ENCODE measurements at regions of chr10 and their contacts with region 1.

Region 1: DNA sequence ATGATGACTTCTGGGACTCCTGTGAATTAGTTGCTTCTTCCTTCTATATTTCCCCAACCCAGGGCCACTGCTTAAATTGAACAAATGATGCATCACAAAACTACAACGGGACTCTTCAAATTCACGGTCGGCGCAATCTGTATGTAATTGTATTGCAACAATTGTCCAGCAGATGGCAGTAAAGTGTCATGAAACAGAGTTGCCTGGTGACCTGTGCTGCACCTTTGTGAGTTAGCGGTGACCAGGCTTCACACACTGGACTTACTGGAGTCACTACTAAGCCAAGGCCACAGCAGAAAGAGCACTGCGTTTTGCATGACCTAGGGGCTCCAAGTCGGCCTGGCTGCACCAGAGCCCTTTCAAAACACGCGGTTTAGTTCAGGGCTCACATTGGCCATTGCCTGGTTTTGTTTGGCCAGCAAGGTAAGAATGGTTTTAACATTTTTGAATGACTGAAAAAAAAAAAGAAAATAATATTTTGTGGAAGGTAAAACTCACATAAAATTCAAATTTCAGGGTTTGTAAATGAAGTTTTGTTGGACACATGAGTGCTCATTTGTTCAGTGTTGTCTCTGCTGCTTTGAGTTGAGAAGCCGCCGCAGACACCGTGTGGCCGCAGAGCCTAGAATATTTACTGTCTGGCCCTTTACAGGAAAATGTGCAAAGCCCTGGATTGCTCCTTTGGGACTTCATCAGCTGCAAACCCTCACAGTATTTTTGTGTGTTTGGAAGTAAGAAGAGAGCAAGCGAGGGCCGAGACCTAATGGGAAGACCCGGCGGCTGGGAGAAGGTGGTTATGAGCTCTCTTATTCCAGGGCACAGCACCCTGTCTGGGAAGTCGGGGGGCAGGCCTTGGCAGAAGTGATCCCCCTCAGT is 23.2 kb upstream of the ZNF32 start:
- DNase-seq: peak; percentile 88
- H3K4me3 Mint-ChIP-seq: no peak overlapping the region
- H3K27ac Mint-ChIP-seq: no peak overlapping the region
- H3K4me1 Mint-ChIP-seq: no peaks in the 10 kb centered on the region
- H3K27me3 Mint-ChIP-seq: peaks cover 26% of the 10 kb centered on the region

Region 2: GRCh38 chr10:43361986-43362839 is 309.7 kb before region 1 on chr10:
- intact Hi-C with region 1: no loop called
- DNase-seq: peak; percentile 99
- H3K4me3 Mint-ChIP-seq: peak overlapping the region; percentile 99
- H3K27ac Mint-ChIP-seq: peak overlapping the region; percentile 99
- H3K4me1 Mint-ChIP-seq: peaks cover 25% of the 10 kb centered on the region
- H3K27me3 Mint-ChIP-seq: no peaks in the 10 kb centered on the region

Region 3: DNA sequence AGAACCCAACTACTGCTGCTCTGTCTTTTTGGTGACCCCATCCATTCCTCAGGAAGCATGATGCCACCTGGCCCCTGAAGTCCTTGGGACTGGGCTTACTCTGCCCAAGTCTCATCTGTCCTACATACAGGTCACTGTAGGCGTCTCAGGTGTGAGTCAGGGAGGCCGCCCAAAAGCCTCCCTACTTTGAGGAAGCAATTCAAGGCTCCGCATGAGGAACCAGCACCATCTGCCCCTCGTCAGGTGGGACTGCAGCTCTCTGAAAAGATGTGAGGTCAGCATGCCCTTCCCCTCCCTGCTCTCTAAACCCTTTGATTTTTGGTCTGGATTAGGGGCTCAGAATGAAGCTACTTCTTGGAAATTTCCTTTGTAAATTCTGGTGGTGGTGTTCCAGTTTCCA is 358.2 kb after region 1 on chr10:
- intact Hi-C with region 1: loop called (anchors 2 kb)
- DNase-seq: peak; percentile 67
- H3K4me3 Mint-ChIP-seq: no peak overlapping the region
- H3K27ac Mint-ChIP-seq: no peak overlapping the region
- H3K4me1 Mint-ChIP-seq: no peaks in the 10 kb centered on the region
- H3K27me3 Mint-ChIP-seq: peaks cover 20% of the 10 kb centered on the region

Region 4: DNA sequence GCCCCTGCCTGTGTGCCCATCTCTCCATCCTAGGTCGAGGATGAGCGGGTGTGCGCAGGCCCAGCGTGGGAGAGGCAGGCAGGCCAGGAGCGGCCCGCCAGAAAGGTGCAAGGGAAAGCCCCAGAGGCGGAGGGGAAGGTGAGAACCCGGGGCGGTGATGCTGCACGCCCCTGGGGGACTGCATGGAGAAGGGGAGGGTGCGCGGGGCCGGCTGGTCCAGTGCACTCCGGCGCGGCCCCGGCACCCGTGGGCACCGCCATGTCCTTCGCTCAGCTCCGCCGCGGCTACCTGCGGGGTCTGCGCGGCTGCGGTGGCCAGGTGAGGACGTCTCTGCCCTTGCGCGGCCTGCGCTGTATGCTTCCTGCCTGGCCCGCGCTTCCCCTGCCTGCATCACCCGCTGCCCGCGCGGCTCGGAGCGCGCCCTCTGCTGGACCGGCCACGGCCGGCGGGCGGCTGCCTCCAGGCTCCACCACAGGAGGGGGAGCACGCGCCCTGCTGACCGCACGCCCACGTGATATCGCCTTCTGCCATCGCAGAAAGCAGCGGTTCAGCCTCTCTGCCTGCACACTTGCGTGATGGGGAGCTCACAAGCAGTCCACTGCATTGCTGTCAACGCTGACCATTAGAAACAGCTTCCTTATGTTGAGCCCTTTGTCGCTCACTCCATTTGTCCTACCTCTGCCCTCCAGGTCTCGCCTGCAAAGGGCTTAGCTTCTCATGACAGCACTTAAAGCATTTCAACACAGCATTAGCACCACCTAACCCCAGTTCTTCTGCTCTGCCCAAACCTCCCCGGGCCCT is 639.1 kb after region 1 on chr10:
- intact Hi-C with region 1: loop called (anchors 1 kb)
- DNase-seq: peak; percentile 91
- H3K4me3 Mint-ChIP-seq: peak overlapping the region; percentile 16
- H3K27ac Mint-ChIP-seq: no peak overlapping the region
- H3K4me1 Mint-ChIP-seq: peaks cover 4% of the 10 kb centered on the region
- H3K27me3 Mint-ChIP-seq: peaks cover 4% of the 10 kb centered on the region

Region 5: DNA sequence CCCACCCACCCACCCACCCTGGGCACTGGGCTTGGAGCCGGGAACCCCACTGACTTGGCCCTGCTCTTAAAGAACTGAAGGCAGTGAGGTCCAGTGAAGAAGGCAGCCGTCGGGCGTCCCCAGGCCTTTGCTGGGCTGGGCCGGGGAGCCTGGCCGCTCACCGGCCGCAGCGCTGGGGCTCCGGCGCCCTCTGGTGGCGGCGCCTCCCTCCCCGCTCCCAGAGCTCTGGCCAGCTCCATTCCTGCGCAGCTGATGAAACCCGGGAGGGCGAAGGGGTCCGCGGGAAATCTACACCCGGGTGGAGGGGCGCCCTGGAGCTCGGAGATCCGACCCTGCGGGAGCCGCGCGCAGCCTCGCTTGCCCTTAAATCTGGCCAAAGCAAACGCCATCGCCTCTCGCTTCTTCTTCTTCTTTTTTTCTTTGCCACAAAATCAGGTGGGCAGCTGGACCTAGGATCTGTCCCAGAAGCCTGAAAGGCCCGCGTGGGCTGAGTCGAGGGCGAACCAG is 714.7 kb after region 1 on chr10:
- intact Hi-C with region 1: loop called (anchors 1 kb)
- DNase-seq: peak; percentile 78
- H3K4me3 Mint-ChIP-seq: no peak overlapping the region
- H3K27ac Mint-ChIP-seq: no peak overlapping the region
- H3K4me1 Mint-ChIP-seq: peaks cover 2% of the 10 kb centered on the region
- H3K27me3 Mint-ChIP-seq: peaks cover 29% of the 10 kb centered on the region

Region 6: GRCh38 chr10:44864637-44865288 is 1192.9 kb after region 1 on chr10:
- intact Hi-C with region 1: loop called (anchors 2 kb)
- DNase-seq: peak; percentile 95
- H3K4me3 Mint-ChIP-seq: peak overlapping the region; percentile 92
- H3K27ac Mint-ChIP-seq: peak overlapping the region; percentile 50
- H3K4me1 Mint-ChIP-seq: peaks cover 15% of the 10 kb centered on the region
- H3K27me3 Mint-ChIP-seq: peaks cover 56% of the 10 kb centered on the region